OCI-LY7 (cell line): ENCODE measurements at regions of chr9 and their contacts with region 1.

Region 1: DNA sequence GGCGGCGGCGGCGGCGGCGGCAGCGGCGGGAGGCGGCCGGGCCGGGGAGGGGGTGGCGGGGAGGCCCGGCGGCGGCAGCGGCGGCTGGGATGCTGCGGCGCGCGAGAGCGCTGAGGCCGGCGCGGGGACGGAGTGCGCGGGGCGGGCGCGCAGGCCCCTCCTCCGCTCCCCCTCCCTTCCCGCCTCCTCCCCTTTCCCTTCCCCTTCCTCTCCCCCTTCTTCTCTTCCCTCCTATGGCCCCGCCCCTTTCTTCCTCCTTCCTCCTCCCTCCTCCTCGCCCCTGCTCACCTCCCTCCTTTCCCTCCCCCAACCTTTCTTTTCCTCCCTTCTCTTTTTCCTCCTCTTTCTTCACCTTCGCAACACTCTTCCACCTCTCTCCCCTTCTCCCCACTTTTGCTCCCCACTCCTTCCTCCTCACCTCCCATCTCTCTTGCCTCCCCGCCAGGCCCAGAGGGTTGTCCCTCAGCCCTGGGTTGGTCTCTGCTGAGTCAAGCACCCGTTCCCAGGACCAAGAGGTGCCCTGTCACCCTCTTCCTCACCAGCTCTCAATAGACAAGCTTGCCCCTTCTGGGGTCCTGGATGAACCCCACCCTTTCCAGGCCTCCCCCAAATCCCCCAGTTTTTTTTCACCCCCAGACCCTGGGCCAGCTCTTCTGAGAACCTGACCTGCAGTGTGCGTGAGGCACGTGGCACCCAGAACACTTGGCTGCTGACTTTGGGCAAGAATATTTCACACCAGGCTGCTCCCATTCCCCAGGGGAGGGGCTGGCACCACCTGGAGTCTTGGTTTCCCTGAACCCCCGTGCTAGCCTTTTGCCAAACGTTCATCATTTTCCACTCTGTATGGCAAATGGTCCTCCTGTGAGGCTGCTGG is at the start of gene SEMA4D:
- DNase-seq: peak; percentile 67
- H3K4me3 ChIP-seq: peak within 1 kb of the TSS; percentile 83
- H3K27ac ChIP-seq: peak within 1 kb of the TSS; percentile 35
- H3K4me1 ChIP-seq: peaks cover 54% of the 10 kb centered on the region
- CTCF ChIP-seq: no peak
- total RNA-seq, gene SEMA4D: 28.5 and 33.7 TPM in 2 replicates

Region 2: DNA sequence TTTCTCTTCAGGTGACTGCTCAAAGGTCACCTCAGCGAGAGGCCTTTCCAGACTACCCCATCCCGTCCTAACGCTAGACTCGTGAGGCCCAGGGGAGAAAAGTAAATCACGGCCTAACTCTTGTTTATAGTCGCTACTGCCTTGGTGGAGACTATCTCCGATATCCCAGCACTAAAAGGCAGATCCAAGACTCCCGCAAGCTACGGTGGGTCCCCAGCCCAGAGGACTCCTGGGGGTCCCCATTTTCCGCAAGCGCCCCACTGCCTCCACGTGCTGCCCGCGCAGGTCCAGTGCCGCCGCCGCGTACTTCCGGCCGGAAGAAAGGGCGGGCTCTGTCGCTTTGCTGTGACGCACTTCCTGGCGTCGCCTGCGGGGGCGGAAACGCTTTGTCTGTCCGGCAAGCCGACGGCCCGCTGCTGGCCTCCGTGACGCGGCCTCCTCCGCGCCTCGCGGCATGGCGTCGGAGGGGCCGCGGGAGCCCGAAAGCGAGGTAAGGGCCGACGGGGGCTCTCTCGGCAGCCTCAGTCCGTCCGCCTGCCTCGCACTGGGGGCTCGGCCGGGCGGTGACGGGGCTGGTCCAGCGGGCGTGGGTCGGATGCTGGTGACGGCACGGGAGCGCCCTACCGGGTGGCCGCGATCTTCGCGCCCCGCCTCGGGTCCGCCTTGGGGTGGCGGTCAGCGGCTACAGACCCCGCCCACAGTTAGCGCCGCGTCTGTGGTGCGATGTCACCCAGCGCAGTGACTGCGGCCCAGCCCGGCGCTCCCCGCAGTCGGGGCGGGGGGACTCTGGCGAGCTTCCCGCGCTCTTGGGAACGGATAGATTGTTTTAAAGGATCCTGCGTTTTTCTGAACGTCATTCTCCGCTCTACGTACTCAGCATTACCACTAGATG is 179.8 kb before region 1 on chr9 and contains the start of gene SECISBP2:
- CTCF ChIA-PET with region 1: no interaction called
- POLR2A ChIA-PET with region 1: no interaction called
- intact Hi-C with region 1: loop called (anchors 5 kb)
- DNase-seq: peak; percentile 95
- H3K4me3 ChIP-seq: peak within 1 kb of the TSS; percentile 77
- H3K27ac ChIP-seq: peak within 1 kb of the TSS; percentile 88
- H3K4me1 ChIP-seq: peaks cover 63% of the 10 kb centered on the region
- CTCF ChIP-seq: no peak
- total RNA-seq, gene SECISBP2: 76.1 and 77.6 TPM in 2 replicates

Region 3: DNA sequence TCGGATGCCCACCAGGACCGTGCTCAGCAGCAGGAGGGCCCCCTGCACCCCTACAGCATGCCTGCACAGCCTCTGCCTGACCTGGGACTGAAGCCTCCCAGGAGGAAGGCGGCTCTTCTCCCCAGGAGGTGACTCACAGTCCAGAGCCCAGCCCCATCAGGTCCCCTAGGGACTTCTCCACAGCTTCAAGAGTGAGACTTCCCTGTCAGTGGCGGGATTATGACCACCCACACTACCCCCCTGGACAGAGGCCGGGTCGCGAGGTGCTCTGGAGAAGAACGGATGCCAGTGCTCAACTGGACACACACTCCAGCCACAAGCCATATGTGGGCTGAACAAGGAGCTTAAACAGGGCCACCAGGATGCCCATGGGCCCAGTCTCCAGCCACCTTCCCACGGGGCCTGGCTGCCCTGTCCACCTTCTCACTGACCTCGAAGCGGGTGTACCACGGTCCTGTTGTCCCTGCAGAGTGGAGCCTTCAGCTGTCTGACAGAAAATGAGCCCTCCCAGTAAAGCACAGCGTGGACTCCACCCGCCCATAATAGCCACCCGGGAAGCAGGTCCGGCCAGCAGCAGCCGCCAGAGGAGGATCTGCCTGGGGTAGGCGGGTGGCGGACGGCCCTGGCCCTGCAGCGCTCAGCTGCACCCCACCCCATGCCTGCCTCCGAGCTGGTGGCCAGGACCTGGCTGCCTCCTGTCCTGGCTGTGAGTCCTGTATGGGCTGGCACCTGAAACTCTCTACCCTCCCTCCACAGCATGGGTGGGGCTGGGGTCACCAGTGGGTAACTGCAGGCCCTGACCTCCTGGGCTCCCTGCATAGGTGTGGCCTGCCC is 55.0 kb before region 1 on chr9:
- CTCF ChIA-PET with region 1: no interaction called
- POLR2A ChIA-PET with region 1: no interaction called
- intact Hi-C with region 1: loop called (anchors 1 kb)
- DNase-seq: no peak
- H3K4me3 ChIP-seq: peak overlapping the region; percentile 45
- H3K27ac ChIP-seq: peak overlapping the region; percentile 49
- H3K4me1 ChIP-seq: peaks cover 71% of the 10 kb centered on the region
- CTCF ChIP-seq: no peak

Region 4: GRCh38 chr9:89542401-89543021 is 44.3 kb after region 1 on chr9:
- CTCF ChIA-PET with region 1: no interaction called
- POLR2A ChIA-PET with region 1: no interaction called
- intact Hi-C with region 1: loop called (anchors 1 kb)
- DNase-seq: peak; percentile 87
- H3K4me3 ChIP-seq: peak overlapping the region; percentile 44
- H3K27ac ChIP-seq: peak overlapping the region; percentile 85
- H3K4me1 ChIP-seq: peaks cover 41% of the 10 kb centered on the region
- CTCF ChIP-seq: no peak

Region 5: DNA sequence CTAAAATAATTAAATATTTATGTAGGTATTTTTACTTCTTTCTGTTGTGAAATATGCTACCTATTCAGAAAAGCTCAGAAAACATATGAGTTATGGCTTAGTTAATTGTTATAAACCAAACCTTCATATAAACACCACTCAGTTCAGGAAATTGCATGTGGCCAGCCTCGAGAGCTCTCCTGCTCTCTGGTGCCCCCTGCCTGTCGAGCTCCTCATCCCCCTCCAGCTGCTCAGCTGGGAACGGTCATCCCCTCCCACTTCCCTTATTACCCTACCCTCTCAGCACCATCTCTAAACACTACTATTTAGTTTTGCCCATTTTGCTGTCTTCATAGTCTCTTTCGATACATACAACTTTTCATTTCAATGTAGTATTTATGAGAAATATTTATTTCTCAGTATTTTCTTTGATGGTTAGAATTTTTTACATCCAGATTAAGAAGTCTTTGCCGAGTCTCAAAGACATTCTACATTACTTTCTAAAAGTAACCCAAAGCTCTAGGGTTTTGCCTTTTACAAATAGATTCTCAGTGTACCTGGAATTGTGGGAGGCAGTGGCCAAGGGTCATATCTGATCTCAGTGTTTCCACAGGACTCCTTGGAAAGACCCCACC is 50.9 kb after region 1 on chr9:
- CTCF ChIA-PET with region 1: interaction called, 3 read pairs
- POLR2A ChIA-PET with region 1: no interaction called
- intact Hi-C with region 1: loop called (anchors 2 kb)
- DNase-seq: peak; percentile 85
- H3K4me3 ChIP-seq: no peak overlapping the region
- H3K27ac ChIP-seq: no peak overlapping the region
- H3K4me1 ChIP-seq: peaks cover 32% of the 10 kb centered on the region
- CTCF ChIP-seq: peak; percentile 99

Region 6: GRCh38 chr9:89634995-89635742 is 137.0 kb after region 1 on chr9:
- CTCF ChIA-PET with region 1: no interaction called
- POLR2A ChIA-PET with region 1: no interaction called
- intact Hi-C with region 1: no loop called
- DNase-seq: no peak
- H3K4me3 ChIP-seq: no peak overlapping the region
- H3K27ac ChIP-seq: no peak overlapping the region
- H3K4me1 ChIP-seq: no peaks in the 10 kb centered on the region
- CTCF ChIP-seq: no peak